Endothelial cell of umbilical vein (primary cell): ENCODE measurements at regions of chrX and their contacts with region 1.

Region 1: DNA sequence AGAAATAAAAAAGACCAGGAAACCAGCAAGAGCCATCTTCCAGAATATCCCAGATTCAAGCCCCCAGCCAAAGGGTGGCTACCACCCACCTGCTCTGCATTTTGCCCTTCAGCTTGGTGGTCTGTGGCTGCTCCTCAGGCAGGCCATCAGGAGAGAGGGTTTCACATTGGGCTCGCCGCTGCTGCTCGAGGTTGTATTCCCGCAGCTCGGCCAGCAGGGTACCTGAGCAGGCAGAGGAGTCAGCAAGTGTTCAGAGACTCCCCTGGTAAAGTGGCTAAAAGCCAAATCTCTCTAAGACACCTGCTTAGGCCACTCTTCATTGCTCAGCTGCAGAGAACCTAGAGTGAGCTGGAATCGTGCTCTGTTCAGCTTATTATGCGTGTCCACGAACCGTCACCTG is 110.8 kb upstream of the HSD17B10 start:
- DNase-seq: no peak
- H3K4me3 ChIP-seq: no peak overlapping the region
- H3K27ac ChIP-seq: no peak overlapping the region
- H3K4me1 ChIP-seq: no peaks in the 10 kb centered on the region
- H3K27me3 ChIP-seq: no peaks in the 10 kb centered on the region
- CTCF ChIP-seq: no peak
- POLR2A ChIP-seq: no peak

Region 2: DNA sequence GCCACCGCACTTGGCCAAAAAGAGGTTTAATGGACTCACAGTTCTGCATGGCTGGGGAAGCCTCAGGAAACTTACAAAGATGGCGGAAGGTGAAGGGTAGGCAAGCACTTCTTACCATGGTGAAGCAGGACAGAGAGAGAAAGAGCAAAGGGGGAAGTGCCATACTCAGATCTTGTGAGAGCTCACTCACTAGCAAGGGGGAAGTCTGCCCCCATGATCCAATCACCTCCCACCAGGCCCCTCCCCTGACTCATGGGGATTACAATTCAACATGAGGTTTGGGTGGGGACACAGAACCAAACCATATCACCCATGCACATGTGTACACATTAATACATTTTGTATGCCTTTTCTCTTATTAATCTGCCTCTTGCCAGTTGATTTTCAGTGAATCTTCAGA is 33.6 kb before region 1 on chrX:
- CTCF ChIA-PET with region 1: no interaction called
- POLR2A ChIA-PET with region 1: no interaction called
- dilution Hi-C with region 1: no loop called
- intact Hi-C with region 1: no loop called
- DNase-seq: no peak
- H3K4me3 ChIP-seq: no peak overlapping the region
- H3K27ac ChIP-seq: no peak overlapping the region
- H3K4me1 ChIP-seq: no peaks in the 10 kb centered on the region
- H3K27me3 ChIP-seq: no peaks in the 10 kb centered on the region
- CTCF ChIP-seq: no peak
- POLR2A ChIP-seq: no peak

Region 3: DNA sequence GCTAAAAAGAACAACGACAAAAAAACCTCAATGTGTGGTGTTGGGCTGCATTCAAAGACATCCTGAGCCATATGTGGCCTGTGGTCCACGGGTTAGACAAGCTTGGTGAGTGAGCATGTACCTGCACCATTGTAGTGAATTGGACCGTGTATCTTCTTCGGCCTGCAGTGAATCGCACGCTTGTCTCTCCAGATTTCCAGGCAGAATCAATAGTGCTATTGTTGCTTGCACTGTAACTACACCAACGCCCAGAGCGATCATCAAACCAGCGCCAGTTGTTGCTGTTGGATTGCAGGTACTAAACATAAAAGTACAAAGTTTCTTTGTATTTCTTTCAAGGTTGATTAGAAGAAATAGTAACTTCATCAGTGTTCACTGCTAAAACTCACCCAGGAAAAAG is 40.0 kb after region 1 on chrX:
- CTCF ChIA-PET with region 1: no interaction called
- POLR2A ChIA-PET with region 1: no interaction called
- dilution Hi-C with region 1: no loop called
- intact Hi-C with region 1: loop called (anchors 5 kb)
- DNase-seq: no peak
- H3K4me3 ChIP-seq: no peak overlapping the region
- H3K27ac ChIP-seq: no peak overlapping the region
- H3K4me1 ChIP-seq: no peaks in the 10 kb centered on the region
- H3K27me3 ChIP-seq: no peaks in the 10 kb centered on the region
- CTCF ChIP-seq: no peak
- POLR2A ChIP-seq: no peak

Region 4: GRCh38 chrX:53595266-53595810 is 50.4 kb after region 1 on chrX:
- CTCF ChIA-PET with region 1: no interaction called
- POLR2A ChIA-PET with region 1: no interaction called
- dilution Hi-C with region 1: no loop called
- intact Hi-C with region 1: no loop called
- DNase-seq: peak; percentile 40
- H3K4me3 ChIP-seq: no peak overlapping the region
- H3K27ac ChIP-seq: peak overlapping the region; percentile 37
- H3K4me1 ChIP-seq: peaks cover 46% of the 10 kb centered on the region
- H3K27me3 ChIP-seq: no peaks in the 10 kb centered on the region
- CTCF ChIP-seq: no peak
- POLR2A ChIP-seq: no peak